ENCODE measurements at regions of chr9 and their contacts with region 1.

Region 1: GRCh38 chr9:117555964-117556629 is 141.2 kb upstream of the ASTN2 start:
- DNase-seq: peak; percentile 60 to 83 (median 73)
- ATAC-seq: peak; percentile 77 to 96 (median 86)
- H3K4me3 ChIP-seq: no peak overlapping the region
- H3K27ac ChIP-seq: no peak overlapping the region
- H3K4me1 ChIP-seq: no peaks in the 10 kb centered on the region
- H3K27me3 ChIP-seq: no peaks in the 10 kb centered on the region
- CTCF ChIP-seq: peak; percentile 40 to 57 (median 52)

Region 2: DNA sequence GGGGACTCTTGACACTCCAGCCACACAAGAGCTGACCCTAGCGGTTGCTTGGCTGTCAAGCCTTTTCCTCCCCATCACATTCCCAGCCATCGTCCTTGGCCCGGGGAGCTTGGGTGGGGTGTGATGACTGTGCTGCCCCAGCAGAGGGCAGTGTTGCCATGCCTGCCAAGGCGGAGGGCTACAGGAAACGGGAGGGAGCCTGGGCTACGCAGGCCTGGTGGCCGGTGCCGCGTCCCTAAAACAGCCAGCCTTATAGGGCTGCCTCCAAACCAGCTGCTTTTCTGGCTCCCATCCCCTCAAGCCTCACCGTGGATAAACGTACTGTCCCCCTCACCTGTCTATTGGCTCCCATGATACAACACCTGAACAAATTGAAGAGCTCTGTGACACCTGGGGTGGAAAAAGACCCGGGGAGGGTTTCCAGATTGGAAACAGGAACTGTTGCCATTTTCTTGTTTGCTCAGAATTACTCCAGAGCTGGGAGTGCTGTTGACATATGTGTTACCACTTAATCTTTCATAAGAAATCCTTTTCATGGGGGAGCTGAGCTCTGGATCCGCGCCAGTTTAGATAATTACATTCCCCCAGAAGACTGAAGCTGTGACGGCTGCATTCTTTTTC is 68.4 kb before region 1 on chr9:
- intact Hi-C with region 1: loop called in 1 of 3 experiments (anchors 10 kb)
- DNase-seq: peak; percentile 70 to 93 (median 84)
- ATAC-seq: peak; percentile 93 to 99 (median 96)
- H3K4me3 ChIP-seq: peak overlapping the region in 1 of 4 donors; percentile 11
- H3K27ac ChIP-seq: peak overlapping the region in 3 of 4 donors; percentile 29 to 65 (median 65)
- H3K4me1 ChIP-seq: peaks cover 5 to 17% (median 8%) of the 10 kb centered on the region in 3 donors
- H3K27me3 ChIP-seq: no peaks in the 10 kb centered on the region
- CTCF ChIP-seq: peak; percentile 90 to 99 (median 96)

Region 3: DNA sequence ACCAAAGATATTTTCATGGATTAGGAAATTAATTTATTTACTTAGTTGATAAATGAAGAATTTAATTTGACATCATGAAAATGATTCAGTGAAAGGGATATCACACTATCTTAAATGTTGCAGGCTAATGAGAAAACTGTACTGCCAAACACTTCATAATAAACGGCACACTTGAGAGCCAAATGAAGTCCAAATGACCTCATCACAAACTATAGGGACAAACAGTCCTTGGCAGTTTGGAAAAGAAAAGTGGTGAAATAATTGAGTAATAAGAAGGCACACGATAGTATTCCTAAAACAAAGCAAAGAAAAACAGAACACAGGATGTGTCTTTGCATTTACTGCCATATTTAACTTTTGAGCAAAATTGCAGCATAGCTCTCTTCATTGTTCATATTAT is 31.2 kb after region 1 on chr9:
- intact Hi-C with region 1: no loop called
- DNase-seq: no peak
- ATAC-seq: no peak
- H3K4me3 ChIP-seq: no peak overlapping the region
- H3K27ac ChIP-seq: no peak overlapping the region
- H3K4me1 ChIP-seq: no peaks in the 10 kb centered on the region
- H3K27me3 ChIP-seq: no peaks in the 10 kb centered on the region
- CTCF ChIP-seq: no peak